Activated CD4-positive, alpha-beta T cell treated with anti-CD3 and anti-CD28 coated beads, Interleukin-2, amount 10 ng/mL, durations not matched to agents 24 days and 14 days (primary cell): ENCODE measurements at regions of chr1 and their contacts with region 1.

Region 1: DNA sequence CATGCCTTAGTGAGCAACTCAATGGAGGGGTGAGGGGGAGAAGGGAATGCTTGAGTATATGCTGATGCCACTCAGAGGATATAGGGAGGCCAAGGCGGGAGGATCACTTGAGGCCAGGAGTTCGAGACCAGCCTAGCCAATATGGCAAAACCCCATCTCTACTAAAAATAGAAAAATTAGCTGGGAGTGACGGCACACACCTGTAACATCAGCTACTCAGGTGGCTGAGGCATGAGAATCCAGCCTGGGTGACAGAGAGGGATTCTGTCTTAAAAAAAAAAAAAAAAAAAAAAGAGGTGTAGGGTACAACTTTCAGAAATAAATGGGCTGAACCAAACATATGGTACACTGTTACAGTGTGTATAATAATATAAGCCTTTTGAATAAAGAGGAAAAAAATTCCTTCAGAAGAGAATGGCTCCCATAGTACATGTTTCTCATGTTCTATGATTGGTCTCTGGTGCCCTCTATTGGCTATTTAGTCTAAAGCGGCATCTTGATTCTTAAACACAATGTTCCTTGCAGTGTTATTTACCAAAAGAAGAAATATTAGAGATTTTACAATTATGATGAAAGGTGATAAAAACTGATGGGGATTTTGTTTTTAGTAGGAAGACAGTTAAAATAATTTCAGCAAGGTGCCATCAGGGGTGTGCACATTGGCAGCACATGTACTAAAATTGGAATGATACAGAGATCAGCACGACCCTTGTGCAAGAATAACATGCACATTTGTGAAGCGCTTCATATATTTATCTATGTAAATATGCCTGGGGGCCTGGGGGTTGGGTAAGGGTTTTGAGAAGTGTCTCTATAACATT is 109.8 kb downstream of the PATJ start:
- DNase-seq: peak; percentile 75
- H3K4me3 Mint-ChIP-seq: no peak overlapping the region
- H3K27ac Mint-ChIP-seq: no peak overlapping the region
- H3K4me1 Mint-ChIP-seq: peaks cover 2% of the 10 kb centered on the region
- H3K27me3 Mint-ChIP-seq: no peaks in the 10 kb centered on the region

Region 2: GRCh38 chr1:59971464-59971911 is 1880.6 kb before region 1 on chr1:
- intact Hi-C with region 1: loop called (anchors 10 kb)
- DNase-seq: peak; percentile 82
- H3K4me3 Mint-ChIP-seq: no peak overlapping the region
- H3K27ac Mint-ChIP-seq: no peak overlapping the region
- H3K4me1 Mint-ChIP-seq: peaks cover 3% of the 10 kb centered on the region
- H3K27me3 Mint-ChIP-seq: peaks cover 12% of the 10 kb centered on the region

Region 3: GRCh38 chr1:60848583-60849188 is 1003.4 kb before region 1 on chr1:
- intact Hi-C with region 1: loop called (anchors 2 kb)
- DNase-seq: no peak
- H3K4me3 Mint-ChIP-seq: no peak overlapping the region
- H3K27ac Mint-ChIP-seq: no peak overlapping the region
- H3K4me1 Mint-ChIP-seq: no peaks in the 10 kb centered on the region
- H3K27me3 Mint-ChIP-seq: peaks cover 11% of the 10 kb centered on the region

Region 4: GRCh38 chr1:61049850-61050540 is 802.1 kb before region 1 on chr1:
- intact Hi-C with region 1: loop called (anchors 2 kb)
- DNase-seq: peak; percentile 96
- H3K4me3 Mint-ChIP-seq: peak overlapping the region; percentile 76
- H3K27ac Mint-ChIP-seq: no peak overlapping the region
- H3K4me1 Mint-ChIP-seq: peaks cover 17% of the 10 kb centered on the region
- H3K27me3 Mint-ChIP-seq: peaks cover 57% of the 10 kb centered on the region

Region 5: DNA sequence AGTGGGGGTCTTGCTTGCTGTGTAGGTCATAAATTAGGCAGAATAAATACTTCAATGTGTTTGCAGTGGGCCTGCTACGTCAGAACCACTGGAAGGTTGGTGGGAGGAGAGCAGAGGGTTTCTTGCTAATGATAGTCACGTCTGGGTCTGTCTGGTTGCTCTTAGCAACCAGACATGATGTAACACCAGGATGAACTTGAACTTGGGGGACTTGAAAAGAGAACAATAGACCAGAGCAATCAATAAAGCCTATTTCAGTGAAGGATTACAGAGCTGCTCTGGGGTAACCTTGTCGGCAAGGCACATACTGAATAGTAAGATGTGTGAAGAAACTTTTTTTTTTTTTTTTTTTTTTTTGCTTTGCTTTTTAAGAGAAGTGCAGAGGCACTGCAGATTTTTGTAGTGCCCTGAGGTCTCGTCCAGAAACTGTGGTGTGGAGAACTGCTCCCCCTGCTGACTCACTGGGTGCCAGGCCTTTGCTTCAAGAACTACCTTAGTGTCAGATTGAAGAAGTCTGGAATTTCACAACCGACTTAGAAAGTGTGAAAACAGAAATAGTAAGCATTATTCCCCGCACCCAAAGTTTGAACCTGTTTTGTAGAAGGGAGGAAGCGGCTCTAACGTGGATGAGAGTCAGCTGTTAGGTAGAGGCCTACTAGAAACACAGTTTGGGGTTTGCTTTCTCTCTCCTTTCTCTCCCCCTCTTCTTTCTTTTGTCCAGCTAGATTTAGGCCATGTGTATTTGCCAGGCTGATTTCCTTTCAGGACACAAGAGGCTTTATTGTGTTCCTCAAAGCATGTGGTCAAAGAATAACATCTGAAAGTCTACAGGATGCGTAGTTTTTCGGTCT is 398.7 kb before region 1 on chr1:
- intact Hi-C with region 1: loop called (anchors 10 kb)
- DNase-seq: peak; percentile 84
- H3K4me3 Mint-ChIP-seq: no peak overlapping the region
- H3K27ac Mint-ChIP-seq: no peak overlapping the region
- H3K4me1 Mint-ChIP-seq: peaks cover 8% of the 10 kb centered on the region
- H3K27me3 Mint-ChIP-seq: peaks cover 15% of the 10 kb centered on the region

Region 6: DNA sequence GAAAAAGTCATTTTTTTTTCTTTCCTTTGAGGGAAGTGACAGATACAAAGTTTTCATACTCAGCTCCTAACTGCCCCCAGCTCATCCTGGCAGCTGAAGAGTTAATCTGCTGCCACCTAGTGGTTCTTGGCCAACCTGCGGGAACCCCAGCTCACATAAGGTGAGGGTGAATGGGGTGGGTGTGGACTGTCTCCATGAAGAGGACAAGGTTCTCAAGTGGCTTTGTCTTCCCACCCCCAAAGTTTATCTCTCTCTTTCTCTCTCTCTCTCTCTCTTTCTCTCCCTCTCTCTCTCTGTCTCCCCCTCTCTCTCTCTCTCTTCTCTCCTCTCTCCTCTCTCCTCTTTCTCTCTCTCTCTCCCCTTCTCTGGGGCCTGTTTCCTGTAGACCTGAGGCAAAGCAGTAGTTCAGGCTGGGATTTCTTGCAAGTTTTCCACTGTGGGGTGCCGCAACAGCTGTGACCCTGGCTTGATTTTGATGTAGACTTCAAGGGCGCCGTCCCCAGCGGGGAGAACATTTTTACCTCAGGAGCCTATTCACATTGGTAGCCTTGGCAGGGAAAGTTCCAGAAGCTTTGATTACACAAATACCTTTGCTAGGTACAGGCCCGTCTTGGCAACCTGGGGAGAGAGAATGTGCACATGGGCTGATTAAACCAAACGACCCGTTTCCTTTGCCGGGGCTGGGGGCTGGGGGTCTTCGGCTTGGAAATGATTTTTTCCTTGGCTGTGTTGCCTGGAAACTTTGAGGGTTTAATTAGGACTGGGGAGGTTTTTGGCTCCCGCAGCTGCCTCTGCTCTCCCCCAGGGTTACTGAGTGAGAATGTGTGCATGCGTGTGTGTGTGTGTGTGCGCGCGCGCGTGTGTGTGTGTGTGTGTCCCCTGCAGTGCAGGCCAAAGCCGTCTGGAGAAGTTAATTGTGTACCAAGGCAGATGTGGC is 263.1 kb before region 1 on chr1:
- intact Hi-C with region 1: loop called (anchors 2 kb)
- DNase-seq: peak; percentile 88
- H3K4me3 Mint-ChIP-seq: no peak overlapping the region
- H3K27ac Mint-ChIP-seq: no peak overlapping the region
- H3K4me1 Mint-ChIP-seq: no peaks in the 10 kb centered on the region
- H3K27me3 Mint-ChIP-seq: peaks cover 22% of the 10 kb centered on the region

Region 7: GRCh38 chr1:61941794-61942193 is 89.7 kb after region 1 on chr1:
- intact Hi-C with region 1: no loop called
- DNase-seq: no peak
- H3K4me3 Mint-ChIP-seq: no peak overlapping the region
- H3K27ac Mint-ChIP-seq: no peak overlapping the region
- H3K4me1 Mint-ChIP-seq: no peaks in the 10 kb centered on the region
- H3K27me3 Mint-ChIP-seq: no peaks in the 10 kb centered on the region